IMR-90 (cell line): ENCODE measurements at regions of chr7 and their contacts with region 1.

Region 1: DNA sequence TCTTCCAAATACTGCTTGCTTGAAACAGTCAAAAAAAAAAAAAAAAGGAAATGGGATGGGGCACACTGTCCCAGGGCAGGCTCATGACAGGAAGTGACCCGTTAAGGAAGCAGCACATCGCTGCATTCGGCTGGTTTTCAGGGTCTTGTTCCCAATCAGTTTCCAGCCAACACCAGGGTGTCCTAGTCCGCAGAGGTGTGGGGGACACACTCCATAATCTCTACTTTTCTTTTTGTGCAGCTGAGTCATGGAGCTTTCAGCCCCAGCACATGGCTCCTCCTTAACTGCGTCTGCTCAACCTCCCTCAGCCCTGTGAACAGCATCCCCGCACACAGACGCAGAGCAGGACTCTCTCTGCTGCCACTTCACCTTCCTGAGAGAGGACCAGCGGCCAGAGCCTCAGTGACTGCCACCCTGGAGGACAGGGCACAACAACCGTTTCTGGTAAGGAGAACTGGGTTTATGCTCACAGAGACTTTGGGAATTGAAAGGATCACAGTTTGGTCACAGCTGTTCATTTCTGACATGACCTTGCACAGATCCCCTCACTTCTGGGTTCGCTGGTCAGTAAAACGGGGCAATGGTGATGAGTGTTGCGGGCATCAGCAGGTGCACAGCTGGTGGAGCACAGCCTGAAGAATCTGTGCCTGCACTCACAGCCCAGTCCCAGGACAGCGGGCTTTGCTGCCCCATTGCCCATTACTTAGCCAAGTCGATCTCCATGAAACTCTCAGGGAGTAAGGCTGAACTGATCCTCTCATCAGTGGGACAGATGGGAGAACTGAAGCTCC is at the start of gene GIMAP5:
- DNase-seq: no peak
- ATAC-seq: no peak
- H3K4me3 ChIP-seq: no peak within 1 kb of the TSS
- H3K27ac ChIP-seq: no peak within 1 kb of the TSS
- H3K4me1 ChIP-seq: no peaks in the 10 kb centered on the region
- H3K27me3 ChIP-seq: no peaks in the 10 kb centered on the region; the same call in 1 of the 2 replicates
- CTCF ChIP-seq: no peak
- POLR2A ChIP-seq: no peak
- RAD21 ChIP-seq: no peak
- total RNA-seq, gene GIMAP5: not detected in 2 replicates

Region 2: GRCh38 chr7:150322833-150323681 is 414.4 kb before region 1 on chr7 and contains the starts of genes ACTR3C and LRRC61:
- CTCF ChIA-PET with region 1: no interaction called
- POLR2A ChIA-PET with region 1: no interaction called
- dilution Hi-C with region 1: no loop called
- in situ Hi-C with region 1: loop called (anchors 25 kb)
- intact Hi-C with region 1: no loop called
- DNase-seq: no peak
- ATAC-seq: no peak
- H3K4me3 ChIP-seq: no peak within 1 kb of the TSS
- H3K27ac ChIP-seq: no peak within 1 kb of the TSS
- H3K4me1 ChIP-seq: peaks cover 10% of the 10 kb centered on the region; the same call in 1 of the 2 replicates
- H3K27me3 ChIP-seq: no peaks in the 10 kb centered on the region; the same call in 1 of the 2 replicates
- CTCF ChIP-seq: no peak
- POLR2A ChIP-seq: no peak
- RAD21 ChIP-seq: no peak
- total RNA-seq, gene ACTR3C: not detected in 2 replicates
- total RNA-seq, gene LRRC61: not detected in 2 replicates